ENCODE measurements at regions of chr5 and their contacts with region 1.

Region 1: GRCh38 chr5:39578887-39579497 is 154.2 kb upstream of the DAB2 start:
- DNase-seq: peak in 1 of 35 experiments; percentile 53
- ATAC-seq: no peak
- H3K4me3 ChIP-seq: no peak overlapping the region
- H3K4me3 Mint-ChIP-seq: no peak overlapping the region
- H3K27ac ChIP-seq: no peak overlapping the region
- H3K27ac Mint-ChIP-seq: no peak overlapping the region
- H3K4me1 ChIP-seq: peaks cover 0 to 7% of the 10 kb centered on the region in 2 experiments
- H3K4me1 Mint-ChIP-seq: peaks cover 9 to 10% (median 10%) of the 10 kb centered on the region in 3 donors
- H3K27me3 ChIP-seq: peaks cover 0 to 5% of the 10 kb centered on the region in 2 experiments
- H3K27me3 Mint-ChIP-seq: peaks cover 0 to 5% of the 10 kb centered on the region in 2 donors

Region 2: GRCh38 chr5:40594811-40595210 is 1015.8 kb after region 1 on chr5:
- CTCF ChIA-PET with region 1: no interaction called
- POLR2A ChIA-PET with region 1: interaction called in 1 of 2 experiments, 10 read pairs
- DNase-seq: no peak
- ATAC-seq: no peak
- H3K4me3 ChIP-seq: no peak overlapping the region
- H3K4me3 Mint-ChIP-seq: no peak overlapping the region
- H3K27ac ChIP-seq: no peak overlapping the region
- H3K27ac Mint-ChIP-seq: no peak overlapping the region
- H3K4me1 ChIP-seq: no peaks in the 10 kb centered on the region
- H3K4me1 Mint-ChIP-seq: peaks cover 15 to 32% (median 28%) of the 10 kb centered on the region in 3 donors
- H3K27me3 ChIP-seq: no peaks in the 10 kb centered on the region
- H3K27me3 Mint-ChIP-seq: peaks cover 0 to 5% of the 10 kb centered on the region in 2 donors